Psoas muscle (tissue), 8 donors: ENCODE measurements at regions of chr1 and their contacts with region 1.

Region 1: GRCh38 chr1:175373786-175374623 is 181.4 kb upstream of the KIAA0040 start:
- DNase-seq: no peak
- ATAC-seq: peak in 2 of 4 donors; percentile 32 to 40
- H3K4me3 ChIP-seq: no peak overlapping the region
- H3K27ac ChIP-seq: no peak overlapping the region
- H3K4me1 ChIP-seq: no peaks in the 10 kb centered on the region
- H3K27me3 ChIP-seq: peaks cover 0 to 4% (median 0%) of the 10 kb centered on the region in 3 donors
- CTCF ChIP-seq: peak; percentile 44

Region 2: GRCh38 chr1:174850726-174851125 is 523.3 kb before region 1 on chr1:
- intact Hi-C with region 1: no loop called
- DNase-seq: no peak
- ATAC-seq: no peak
- H3K4me3 ChIP-seq: no peak overlapping the region
- H3K27ac ChIP-seq: no peak overlapping the region
- H3K4me1 ChIP-seq: no peaks in the 10 kb centered on the region
- H3K27me3 ChIP-seq: no peaks in the 10 kb centered on the region
- CTCF ChIP-seq: no peak

Region 3: GRCh38 chr1:175043824-175044223 is 330.2 kb before region 1 on chr1:
- intact Hi-C with region 1: no loop called
- DNase-seq: no peak
- ATAC-seq: no peak
- H3K4me3 ChIP-seq: no peak overlapping the region
- H3K27ac ChIP-seq: no peak overlapping the region
- H3K4me1 ChIP-seq: no peaks in the 10 kb centered on the region
- H3K27me3 ChIP-seq: peaks cover 0 to 4% (median 3%) of the 10 kb centered on the region in 3 donors
- CTCF ChIP-seq: no peak

Region 4: DNA sequence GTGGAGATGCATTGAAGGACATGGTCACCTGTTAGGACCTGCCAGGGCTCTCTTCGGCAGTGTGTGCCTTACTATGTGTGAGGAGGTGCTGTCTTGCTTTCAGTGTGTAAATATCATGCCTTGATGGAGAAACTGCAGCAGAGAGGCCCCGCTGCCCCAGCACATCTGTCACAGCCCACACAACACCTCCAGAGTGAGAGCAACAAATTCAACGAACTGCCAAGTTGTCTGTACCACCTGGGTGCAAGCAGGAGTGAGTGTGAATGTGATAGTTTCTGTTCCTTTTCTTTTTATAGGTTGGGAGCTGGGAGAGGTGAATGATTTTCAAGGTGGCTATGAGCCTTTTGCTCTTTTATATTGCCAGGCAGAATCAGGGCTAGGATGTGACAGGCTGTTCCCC is 66.8 kb before region 1 on chr1:
- intact Hi-C with region 1: no loop called
- DNase-seq: no peak
- ATAC-seq: no peak
- H3K4me3 ChIP-seq: no peak overlapping the region
- H3K27ac ChIP-seq: no peak overlapping the region
- H3K4me1 ChIP-seq: no peaks in the 10 kb centered on the region
- H3K27me3 ChIP-seq: no peaks in the 10 kb centered on the region
- CTCF ChIP-seq: no peak

Region 5: DNA sequence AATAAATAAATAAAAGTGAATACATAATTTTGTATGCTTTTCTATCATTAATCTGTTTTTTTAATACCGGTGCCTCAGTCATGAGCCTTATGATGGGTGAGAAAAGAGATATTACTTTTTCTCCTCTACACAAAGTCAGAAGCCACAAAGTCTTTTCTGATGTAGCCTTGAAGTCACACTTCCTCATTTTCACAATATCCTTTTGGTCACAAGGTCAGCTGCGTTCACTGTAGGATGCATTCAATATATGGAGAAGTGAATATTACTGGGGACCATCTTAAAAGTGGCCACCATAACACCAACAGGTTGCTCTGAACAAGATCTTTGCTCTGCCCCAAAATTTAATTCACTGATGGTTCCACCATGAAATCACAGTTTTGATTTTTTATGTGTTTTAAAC is 452.7 kb after region 1 on chr1:
- intact Hi-C with region 1: loop called in 1 of 2 experiments (anchors 5 kb)
- DNase-seq: no peak
- ATAC-seq: no peak
- H3K4me3 ChIP-seq: no peak overlapping the region
- H3K27ac ChIP-seq: no peak overlapping the region
- H3K4me1 ChIP-seq: no peaks in the 10 kb centered on the region
- H3K27me3 ChIP-seq: no peaks in the 10 kb centered on the region
- CTCF ChIP-seq: no peak